K562 (cell line): ENCODE measurements at regions of chr9 and their contacts with region 1.

Region 1: GRCh38 chr9:69961830-69962229 is 81.8 kb upstream of the MAMDC2 start:
- DNase-seq: no peak
- ATAC-seq: no peak
- H3K4me3 ChIP-seq: no peak overlapping the region
- H3K27ac ChIP-seq: no peak overlapping the region
- H3K4me1 ChIP-seq: no peaks in the 10 kb centered on the region
- H3K27me3 ChIP-seq: no peaks in the 10 kb centered on the region
- CTCF ChIP-seq: no peak
- EP300 ChIP-seq: no peak
- POLR2A ChIP-seq: no peak
- RAD21 ChIP-seq: no peak

Region 2: GRCh38 chr9:70340572-70340971 is 378.7 kb after region 1 on chr9:
- CTCF ChIA-PET with region 1: no interaction called
- POLR2A ChIA-PET with region 1: no interaction called
- in situ Hi-C with region 1: no loop called
- intact Hi-C with region 1: loop called (anchors 10 kb)
- DNase-seq: peak in 2 of 4 experiments; percentile 6 to 7
- ATAC-seq: no peak
- H3K4me3 ChIP-seq: no peak overlapping the region
- H3K27ac ChIP-seq: no peak overlapping the region
- H3K4me1 ChIP-seq: no peaks in the 10 kb centered on the region; a peak in 1 of 5 replicates
- H3K27me3 ChIP-seq: no peaks in the 10 kb centered on the region
- CTCF ChIP-seq: peak in 1 of 3 experiments; percentile 46; a peak in 3 of 6 replicates
- EP300 ChIP-seq: no peak
- POLR2A ChIP-seq: no peak
- RAD21 ChIP-seq: peak; percentile 44 to 67